GM18951 (cell line): ENCODE measurements at regions of chr1 and their contacts with region 1.

Region 1: GRCh38 chr1:101309334-101310311 is 72.8 kb downstream of the S1PR1 start:
- POLR2A ChIP-seq: peak; percentile 53

Region 2: DNA sequence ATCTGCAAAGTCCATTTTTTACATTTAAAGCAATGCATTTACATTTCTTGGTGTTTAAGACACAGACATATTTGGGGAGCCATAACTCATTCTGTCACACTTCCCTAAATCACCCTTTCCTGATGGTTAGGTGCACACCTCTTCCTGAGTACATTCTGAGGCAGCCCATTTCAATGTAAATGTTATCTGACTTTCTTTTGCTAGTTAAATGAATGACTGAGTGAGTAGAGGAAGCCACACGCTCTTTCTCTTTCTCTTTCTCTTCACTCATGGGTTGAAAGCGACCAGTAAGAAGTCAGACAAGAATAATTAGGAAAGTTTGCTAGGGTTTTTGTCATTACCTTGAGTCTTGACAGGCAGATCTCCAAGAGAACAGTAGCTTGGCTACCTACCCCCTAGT is 70.3 kb after region 1 on chr1:
- in situ Hi-C with region 1: no loop called
- POLR2A ChIP-seq: no peak

Region 3: DNA sequence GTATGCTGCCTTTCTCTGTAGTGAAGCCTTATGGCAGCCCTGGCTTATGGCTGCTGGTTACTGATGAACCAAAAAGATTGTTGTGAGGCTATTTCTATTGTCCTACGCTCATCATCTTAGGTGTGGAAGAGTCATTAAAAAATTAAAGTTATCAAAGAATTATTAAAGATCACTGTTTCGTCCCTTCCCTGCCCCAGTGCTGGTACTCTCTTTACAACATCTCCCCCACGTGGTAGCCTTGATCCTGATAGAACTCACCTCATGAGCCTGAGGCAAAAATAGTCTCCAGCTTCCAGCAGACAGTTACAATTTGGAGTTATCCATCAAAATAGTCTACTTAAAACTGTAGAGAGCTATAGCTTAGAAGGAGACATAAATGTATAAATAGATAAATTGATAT is 128.7 kb after region 1 on chr1:
- in situ Hi-C with region 1: loop called (anchors 25 kb)
- POLR2A ChIP-seq: no peak